ENCODE measurements at regions of chr2 and their contacts with region 1.

Region 1: DNA sequence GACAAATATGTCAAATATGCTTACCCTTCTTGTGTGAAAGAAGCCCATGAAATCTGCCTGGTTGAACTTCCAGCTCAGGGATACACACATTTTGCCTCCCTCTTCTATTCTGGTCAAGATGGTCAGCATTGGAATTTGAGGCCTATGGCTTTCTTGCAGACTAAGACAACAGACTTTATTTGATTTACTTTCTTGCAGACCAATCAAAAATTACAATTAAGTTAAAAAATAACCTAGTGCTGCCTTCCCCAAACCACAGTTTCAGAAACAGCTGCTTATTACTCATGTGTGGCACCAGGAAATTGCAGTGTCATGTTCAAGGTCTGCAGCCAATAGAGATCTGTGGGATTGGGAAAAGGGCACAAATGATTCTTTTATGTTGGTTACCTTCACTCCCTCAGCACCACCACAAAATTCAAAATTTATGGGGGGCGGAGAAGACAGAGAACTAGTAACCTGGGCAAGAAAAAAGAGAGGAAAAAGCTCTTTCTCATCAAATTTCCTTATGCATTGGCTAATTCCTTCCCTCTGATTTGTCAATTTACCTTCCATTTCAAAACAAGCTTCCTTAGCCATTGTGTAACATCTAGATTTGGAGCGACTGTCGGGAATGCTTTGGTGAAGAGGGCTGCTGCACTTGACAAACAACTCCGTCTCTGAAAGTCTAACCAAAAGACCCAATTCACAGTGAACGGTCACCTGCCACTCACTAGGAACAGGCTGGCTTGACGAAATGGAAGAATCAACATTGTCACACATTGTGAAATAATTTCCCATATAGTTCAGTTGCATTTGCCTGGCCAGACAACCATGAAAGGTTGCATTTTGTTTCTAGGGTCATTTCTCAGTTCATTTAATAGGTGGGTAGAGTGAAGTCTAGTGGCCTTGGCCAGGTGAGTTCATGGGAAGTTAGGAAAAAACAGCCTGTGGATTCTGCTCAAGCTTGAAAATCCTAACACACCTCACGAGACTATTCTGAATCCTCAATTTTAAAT is 100.4 kb upstream of the FZD5 start:
- DNase-seq: peak; percentile 100
- ATAC-seq: peak; percentile 95
- H3K4me3 ChIP-seq: peak overlapping the region; percentile 3 to 10 (median 3); a peak in 4 of 6 replicates
- H3K27ac ChIP-seq: peak overlapping the region; percentile 81
- H3K4me1 ChIP-seq: peaks cover 57% of the 10 kb centered on the region
- H3K27me3 ChIP-seq: no peaks in the 10 kb centered on the region
- CTCF ChIP-seq: no peak
- EP300 ChIP-seq: peak; percentile 97 to 99
- POLR2A ChIP-seq: peak in 1 of 2 experiments; percentile 57; a peak in 2 of 4 replicates
- RAD21 ChIP-seq: peak; percentile 36; the same call in 1 of the 2 replicates

Region 2: GRCh38 chr2:207819839-207820784 is 50.0 kb before region 1 on chr2:
- CTCF ChIA-PET with region 1: no interaction called
- POLR2A ChIA-PET with region 1: interaction called, 27 read pairs
- in situ Hi-C with region 1: no loop called
- intact Hi-C with region 1: no loop called
- DNase-seq: peak; percentile 97
- ATAC-seq: peak; percentile 89
- H3K4me3 ChIP-seq: peak overlapping the region; percentile 41 to 55 (median 53)
- H3K27ac ChIP-seq: peak overlapping the region; percentile 94
- H3K4me1 ChIP-seq: peaks cover 100% of the 10 kb centered on the region
- H3K27me3 ChIP-seq: no peaks in the 10 kb centered on the region
- CTCF ChIP-seq: no peak; the same call in 1 of the 2 replicates
- EP300 ChIP-seq: peak in 1 of 2 experiments; percentile 83; a peak in 3 of 4 replicates
- POLR2A ChIP-seq: peak; percentile 68 to 81
- RAD21 ChIP-seq: peak; percentile 40; the same call in 1 of the 2 replicates

Region 3: DNA sequence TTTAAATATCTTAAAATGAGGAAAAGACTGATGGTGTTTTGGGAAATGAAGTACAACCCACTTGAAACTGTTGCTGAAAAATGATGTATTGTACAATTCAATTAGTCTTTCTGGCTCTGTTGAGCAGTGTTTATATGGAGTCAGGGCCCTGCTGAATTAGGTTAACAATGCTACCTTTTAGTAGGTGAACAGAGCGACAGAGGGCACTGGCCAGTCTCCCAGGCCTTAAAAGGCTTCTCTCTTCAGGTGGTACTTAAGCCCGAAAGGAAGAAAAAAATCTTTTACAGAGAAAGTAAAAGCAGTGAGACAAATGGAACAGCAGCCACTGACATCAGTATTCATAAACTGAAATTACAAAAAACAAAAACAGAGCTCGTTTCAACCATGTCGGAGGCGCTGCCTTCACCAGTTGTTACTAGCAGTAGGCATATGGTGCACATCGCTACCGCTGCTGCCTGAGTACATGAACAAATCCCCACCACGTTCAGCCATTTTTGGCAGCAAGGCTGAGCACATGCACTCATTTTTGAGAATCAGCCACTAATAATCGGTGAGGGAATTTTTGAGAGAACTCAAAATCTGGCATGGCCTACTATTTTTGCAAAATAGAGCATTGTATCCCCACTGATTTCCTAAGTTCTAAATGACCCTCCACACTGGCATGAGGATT is 63.5 kb after region 1 on chr2:
- CTCF ChIA-PET with region 1: no interaction called
- POLR2A ChIA-PET with region 1: interaction called, 13 read pairs
- in situ Hi-C with region 1: no loop called
- intact Hi-C with region 1: loop called (anchors 2 kb)
- DNase-seq: no peak
- ATAC-seq: no peak
- H3K4me3 ChIP-seq: no peak overlapping the region
- H3K27ac ChIP-seq: peak overlapping the region; percentile 9
- H3K4me1 ChIP-seq: peaks cover 63% of the 10 kb centered on the region
- H3K27me3 ChIP-seq: no peaks in the 10 kb centered on the region
- CTCF ChIP-seq: no peak
- EP300 ChIP-seq: no peak
- POLR2A ChIP-seq: no peak
- RAD21 ChIP-seq: no peak

Region 4: GRCh38 chr2:207951734-207952470 is 81.8 kb after region 1 on chr2:
- CTCF ChIA-PET with region 1: no interaction called
- POLR2A ChIA-PET with region 1: no interaction called
- in situ Hi-C with region 1: no loop called
- intact Hi-C with region 1: no loop called
- DNase-seq: no peak
- ATAC-seq: no peak
- H3K4me3 ChIP-seq: no peak overlapping the region
- H3K27ac ChIP-seq: no peak overlapping the region
- H3K4me1 ChIP-seq: peaks cover 44% of the 10 kb centered on the region
- H3K27me3 ChIP-seq: no peaks in the 10 kb centered on the region
- CTCF ChIP-seq: no peak
- EP300 ChIP-seq: no peak
- POLR2A ChIP-seq: no peak
- RAD21 ChIP-seq: no peak

Region 5: DNA sequence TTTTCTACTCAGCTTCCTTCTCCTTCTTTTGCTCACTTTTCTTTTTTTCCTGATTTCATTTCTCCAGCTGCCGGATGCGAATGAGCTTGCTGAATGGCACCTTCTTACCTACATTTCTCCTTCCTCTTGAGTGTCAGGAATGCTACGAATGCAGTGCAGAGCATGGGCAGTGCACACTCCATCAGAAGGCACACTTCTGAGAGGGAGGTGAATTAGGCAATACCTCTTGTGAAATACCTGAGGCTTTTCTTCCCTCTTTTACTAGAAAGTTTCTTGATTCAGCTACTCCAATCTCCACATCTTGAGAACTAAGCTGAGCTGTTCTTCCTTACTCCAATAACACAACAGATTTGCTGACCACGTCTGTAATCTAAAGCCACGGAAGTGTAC is 104.1 kb after region 1 on chr2:
- CTCF ChIA-PET with region 1: no interaction called
- POLR2A ChIA-PET with region 1: interaction called, 4 read pairs
- in situ Hi-C with region 1: no loop called
- intact Hi-C with region 1: loop called (anchors 2 kb)
- DNase-seq: no peak
- ATAC-seq: no peak
- H3K4me3 ChIP-seq: no peak overlapping the region
- H3K27ac ChIP-seq: no peak overlapping the region
- H3K4me1 ChIP-seq: peaks cover 28% of the 10 kb centered on the region
- H3K27me3 ChIP-seq: no peaks in the 10 kb centered on the region
- CTCF ChIP-seq: no peak
- EP300 ChIP-seq: no peak
- POLR2A ChIP-seq: no peak
- RAD21 ChIP-seq: no peak

Region 6: GRCh38 chr2:208000701-208001395 is 130.8 kb after region 1 on chr2:
- CTCF ChIA-PET with region 1: no interaction called
- POLR2A ChIA-PET with region 1: no interaction called
- in situ Hi-C with region 1: no loop called
- intact Hi-C with region 1: no loop called
- DNase-seq: no peak
- ATAC-seq: no peak
- H3K4me3 ChIP-seq: no peak overlapping the region
- H3K27ac ChIP-seq: no peak overlapping the region
- H3K4me1 ChIP-seq: no peaks in the 10 kb centered on the region
- H3K27me3 ChIP-seq: no peaks in the 10 kb centered on the region
- CTCF ChIP-seq: no peak
- EP300 ChIP-seq: no peak
- POLR2A ChIP-seq: no peak
- RAD21 ChIP-seq: no peak

Region 7: DNA sequence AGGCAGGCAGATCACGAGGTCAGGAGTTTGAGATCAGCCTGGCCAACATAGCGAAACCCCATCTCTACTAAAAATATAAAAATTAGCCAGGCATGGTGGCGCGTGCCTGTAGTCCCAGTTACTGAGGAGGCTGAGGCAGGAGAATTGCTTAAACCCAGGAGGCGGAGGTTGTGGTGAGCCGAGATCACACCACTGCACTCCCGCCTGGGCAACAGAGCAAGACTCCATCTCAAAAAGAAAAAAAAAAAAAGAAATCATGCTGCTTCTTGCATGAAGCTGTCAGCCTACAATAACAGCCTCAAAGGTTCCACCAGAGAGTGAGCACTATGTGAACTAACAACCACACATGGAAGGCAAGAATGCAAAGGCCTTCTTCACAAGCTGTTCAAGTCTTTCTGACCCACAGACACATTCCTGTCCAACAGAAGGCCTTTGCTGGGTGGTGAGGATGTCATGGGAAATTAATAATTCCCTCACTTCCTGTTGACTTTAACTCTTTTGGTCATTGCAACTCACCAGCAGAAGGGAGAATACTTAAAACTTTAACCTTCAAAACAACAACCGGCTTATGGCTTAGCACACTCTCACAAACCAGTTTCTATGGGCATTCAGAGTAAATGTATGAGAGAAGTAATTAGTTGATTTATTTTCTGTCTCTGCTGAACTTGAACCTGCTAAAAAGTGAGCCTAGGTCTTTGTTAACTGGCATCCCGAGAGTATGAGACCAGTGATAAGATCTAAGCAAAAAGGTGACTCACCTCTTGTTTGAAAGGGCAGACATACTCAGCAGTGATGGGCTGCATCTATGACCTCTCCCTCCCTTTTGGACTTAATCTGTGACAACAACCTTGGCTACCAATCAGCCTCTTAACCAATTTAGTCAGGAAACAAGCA is 143.5 kb after region 1 on chr2:
- CTCF ChIA-PET with region 1: no interaction called
- POLR2A ChIA-PET with region 1: no interaction called
- in situ Hi-C with region 1: no loop called
- intact Hi-C with region 1: no loop called
- DNase-seq: peak; percentile 92
- ATAC-seq: peak; percentile 94
- H3K4me3 ChIP-seq: no peak overlapping the region
- H3K27ac ChIP-seq: no peak overlapping the region
- H3K4me1 ChIP-seq: peaks cover 31% of the 10 kb centered on the region
- H3K27me3 ChIP-seq: no peaks in the 10 kb centered on the region
- CTCF ChIP-seq: no peak
- EP300 ChIP-seq: peak in 1 of 2 experiments; percentile 54; a peak in 2 of 4 replicates
- POLR2A ChIP-seq: no peak
- RAD21 ChIP-seq: no peak

Region 8: DNA sequence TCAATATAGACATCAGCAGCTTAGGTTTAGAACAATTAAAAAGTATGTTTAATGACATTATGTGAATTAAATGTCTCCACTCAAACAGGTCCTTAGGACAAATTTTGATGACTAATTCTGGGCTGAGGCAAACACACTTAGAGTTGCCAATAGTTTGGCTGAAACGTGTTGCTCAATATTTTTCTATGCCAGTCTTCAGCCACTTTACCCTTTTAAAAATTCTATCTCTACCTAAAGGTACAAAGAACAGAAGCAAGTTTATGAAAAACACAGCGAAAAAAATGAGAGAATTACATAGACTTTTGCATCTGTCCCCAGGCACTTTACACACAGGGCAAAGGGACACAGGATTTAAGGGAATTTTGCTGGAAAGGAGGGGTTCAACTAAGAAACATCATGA is 380.3 kb after region 1 on chr2:
- CTCF ChIA-PET with region 1: no interaction called
- POLR2A ChIA-PET with region 1: no interaction called
- in situ Hi-C with region 1: no loop called
- intact Hi-C with region 1: no loop called
- DNase-seq: no peak
- ATAC-seq: no peak
- H3K4me3 ChIP-seq: no peak overlapping the region; a peak in 1 of 6 replicates
- H3K27ac ChIP-seq: peak overlapping the region; percentile 3
- H3K4me1 ChIP-seq: peaks cover 73% of the 10 kb centered on the region
- H3K27me3 ChIP-seq: no peaks in the 10 kb centered on the region; a peak in 1 of 5 replicates
- CTCF ChIP-seq: no peak
- EP300 ChIP-seq: no peak
- POLR2A ChIP-seq: no peak
- RAD21 ChIP-seq: no peak

Measured in HepG2 (cell line).